ENCODE measurements at regions of chr19 and their contacts with region 1.

Region 1: DNA sequence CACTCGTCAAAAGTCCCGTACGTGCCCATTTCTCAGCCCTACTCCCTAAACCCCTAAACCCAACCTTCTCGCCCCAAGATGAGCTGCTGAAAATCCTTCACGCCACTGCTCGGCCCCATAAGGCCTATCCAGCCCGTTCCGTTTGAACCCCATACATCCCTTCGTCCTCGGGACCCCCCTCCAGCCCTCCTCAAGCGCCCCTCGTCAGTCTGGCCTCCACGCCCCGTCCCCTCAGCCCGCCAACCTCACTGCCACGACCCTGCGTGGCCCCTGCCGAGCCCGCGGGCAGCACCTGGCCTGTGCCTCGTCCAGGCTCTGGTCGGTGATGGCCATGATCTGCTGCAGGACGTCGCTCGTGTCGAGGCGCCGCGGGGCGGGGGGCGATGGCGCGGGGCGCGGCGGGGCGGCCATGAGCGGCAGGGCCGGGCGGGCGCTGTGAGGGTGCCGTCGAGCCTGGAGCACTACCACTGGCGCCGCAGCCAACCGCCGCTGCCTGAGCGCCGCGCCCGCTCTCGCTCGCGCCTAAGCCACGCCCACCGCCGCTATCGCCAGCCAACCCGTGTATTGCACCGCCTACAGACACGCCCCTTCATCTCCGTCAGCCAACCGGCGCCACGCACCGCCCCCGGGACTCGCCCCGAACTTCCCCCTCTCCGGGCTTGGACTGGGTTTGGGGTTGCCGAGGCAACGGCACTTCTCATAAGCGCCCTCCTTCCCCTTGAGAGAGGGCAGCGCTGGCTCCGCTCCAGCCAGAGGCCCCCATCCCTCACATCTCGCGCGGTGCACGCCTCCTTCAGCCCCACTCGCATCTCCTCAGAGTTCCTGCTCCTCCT is at the start of gene PBX4:
- DNase-seq: peak; percentile 99
- H3K4me3 ChIP-seq: peak within 1 kb of the TSS; percentile 71 to 86
- H3K4me3 Mint-ChIP-seq: peak within 1 kb of the TSS; percentile 90 to 98 (median 94)
- H3K27ac ChIP-seq: peak within 1 kb of the TSS; percentile 93
- H3K27ac Mint-ChIP-seq: peak within 1 kb of the TSS; percentile 86 to 99 (median 97)
- H3K4me1 ChIP-seq: peaks cover 53% of the 10 kb centered on the region
- H3K4me1 Mint-ChIP-seq: peaks cover 33 to 49% (median 40%) of the 10 kb centered on the region in 4 donors
- H3K27me3 ChIP-seq: no peaks in the 10 kb centered on the region
- H3K27me3 Mint-ChIP-seq: no peaks in the 10 kb centered on the region
- total RNA-seq, gene PBX4: 46.5 to 56.3 TPM

Region 2: GRCh38 chr19:19404879-19405860 is 213.3 kb before region 1 on chr19 and contains the start of gene GATAD2A:
- CTCF ChIA-PET with region 1: no interaction called
- POLR2A ChIA-PET with region 1: no interaction called
- intact Hi-C with region 1: no loop called
- DNase-seq: peak; percentile 86 to 94 (median 90)
- H3K4me3 ChIP-seq: peak within 1 kb of the TSS; percentile 21 to 78
- H3K4me3 Mint-ChIP-seq: peak within 1 kb of the TSS; percentile 86 to 97 (median 95)
- H3K27ac ChIP-seq: peak within 1 kb of the TSS; percentile 71
- H3K27ac Mint-ChIP-seq: peak within 1 kb of the TSS; percentile 92 to 96 (median 95)
- H3K4me1 ChIP-seq: peaks cover 53% of the 10 kb centered on the region
- H3K4me1 Mint-ChIP-seq: peaks cover 36 to 72% (median 55%) of the 10 kb centered on the region in 4 donors
- H3K27me3 ChIP-seq: no peaks in the 10 kb centered on the region
- H3K27me3 Mint-ChIP-seq: no peaks in the 10 kb centered on the region
- total RNA-seq, gene GATAD2A: 101 to 108 TPM

Region 3: GRCh38 chr19:19554074-19555023 is 64.1 kb before region 1 on chr19:
- CTCF ChIA-PET with region 1: interaction called, 21 read pairs
- POLR2A ChIA-PET with region 1: interaction called, 5 read pairs
- intact Hi-C with region 1: no loop called
- DNase-seq: peak; percentile 42 to 50 (median 45)
- H3K4me3 ChIP-seq: no peak overlapping the region
- H3K4me3 Mint-ChIP-seq: peak overlapping the region in 1 of 8 donors; percentile 10
- H3K27ac ChIP-seq: no peak overlapping the region
- H3K27ac Mint-ChIP-seq: peak overlapping the region in 1 of 7 donors; percentile 40
- H3K4me1 ChIP-seq: peaks cover 6% of the 10 kb centered on the region
- H3K4me1 Mint-ChIP-seq: peaks cover 10 to 17% (median 12%) of the 10 kb centered on the region in 4 donors
- H3K27me3 ChIP-seq: no peaks in the 10 kb centered on the region
- H3K27me3 Mint-ChIP-seq: no peaks in the 10 kb centered on the region

Region 4: DNA sequence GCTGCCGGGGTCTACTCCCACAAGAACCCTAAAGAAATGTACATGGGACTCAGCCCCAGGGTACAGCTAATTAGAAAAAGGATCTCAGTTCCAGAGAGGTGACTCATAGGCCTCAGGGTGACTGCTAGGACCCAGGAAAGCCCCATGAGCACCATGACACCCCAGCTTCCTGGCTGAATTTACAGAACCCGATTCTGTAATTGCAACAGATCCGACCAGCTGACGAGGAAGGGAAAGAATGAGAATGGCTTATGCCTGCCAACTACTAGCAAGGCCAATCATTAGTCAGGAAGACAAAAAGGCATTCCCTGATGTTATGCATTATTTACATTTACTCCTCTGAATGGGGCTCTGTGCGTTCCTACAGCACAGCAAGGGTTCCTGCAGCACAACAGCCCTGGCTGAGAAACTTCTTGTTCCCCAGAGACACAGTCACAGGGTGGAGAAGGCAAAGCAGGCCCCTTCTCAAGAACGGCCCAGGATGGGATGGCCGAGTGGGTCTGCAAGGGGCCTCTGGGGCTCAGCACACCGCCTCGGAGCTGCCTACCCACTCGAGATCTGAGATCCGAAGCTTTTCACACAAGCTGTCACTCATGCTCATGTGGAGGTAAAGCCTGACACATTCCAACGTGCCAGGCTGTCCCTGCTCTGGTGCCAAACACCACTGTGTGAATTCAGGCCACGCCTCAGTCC is 27.2 kb before region 1 on chr19:
- CTCF ChIA-PET with region 1: interaction called, 4 read pairs
- POLR2A ChIA-PET with region 1: interaction called, 18 read pairs
- intact Hi-C with region 1: no loop called
- DNase-seq: peak; percentile 63 to 96 (median 69)
- H3K4me3 ChIP-seq: no peak overlapping the region
- H3K4me3 Mint-ChIP-seq: peak overlapping the region in 7 of 8 donors; percentile 28 to 88 (median 62)
- H3K27ac ChIP-seq: peak overlapping the region; percentile 90
- H3K27ac Mint-ChIP-seq: peak overlapping the region; percentile 92 to 98 (median 96)
- H3K4me1 ChIP-seq: peaks cover 71% of the 10 kb centered on the region
- H3K4me1 Mint-ChIP-seq: peaks cover 30 to 74% (median 52%) of the 10 kb centered on the region in 4 donors
- H3K27me3 ChIP-seq: no peaks in the 10 kb centered on the region
- H3K27me3 Mint-ChIP-seq: no peaks in the 10 kb centered on the region

Region 5: GRCh38 chr19:19597809-19598306 is 20.6 kb before region 1 on chr19:
- CTCF ChIA-PET with region 1: interaction called, 4 read pairs
- POLR2A ChIA-PET with region 1: interaction called, 39 read pairs
- intact Hi-C with region 1: loop called (anchors 1 kb)
- DNase-seq: peak; percentile 85 to 93 (median 91)
- H3K4me3 ChIP-seq: no peak overlapping the region
- H3K4me3 Mint-ChIP-seq: peak overlapping the region; percentile 47 to 84 (median 79)
- H3K27ac ChIP-seq: peak overlapping the region; percentile 89
- H3K27ac Mint-ChIP-seq: peak overlapping the region; percentile 93 to 100 (median 98)
- H3K4me1 ChIP-seq: peaks cover 83% of the 10 kb centered on the region
- H3K4me1 Mint-ChIP-seq: peaks cover 48 to 84% (median 62%) of the 10 kb centered on the region in 4 donors
- H3K27me3 ChIP-seq: no peaks in the 10 kb centered on the region
- H3K27me3 Mint-ChIP-seq: no peaks in the 10 kb centered on the region

Measured in CD4-positive, alpha-beta memory T cell (primary cell).